GM18951 (cell line): ENCODE measurements at regions of chr7 and their contacts with region 1.

Region 1: DNA sequence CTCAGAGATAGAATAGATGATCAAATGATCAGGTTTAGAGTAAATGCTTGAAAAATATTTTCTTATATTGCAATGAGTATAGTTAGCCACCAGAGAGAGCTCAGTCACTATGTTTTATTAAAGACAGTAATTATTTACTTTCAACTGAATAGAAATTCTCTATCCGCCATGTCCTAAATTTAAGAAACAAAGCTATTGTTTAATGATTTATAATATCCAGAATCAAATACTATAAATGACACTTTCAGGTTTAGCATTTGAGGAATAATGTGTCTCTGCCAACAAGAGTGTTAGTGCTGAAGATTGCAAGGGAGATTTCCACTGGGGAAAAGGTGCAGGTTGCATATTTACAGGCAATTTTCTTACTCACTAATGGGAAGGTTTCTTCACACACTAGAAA is 184.7 kb downstream of the DGKB start:
- POLR2A ChIP-seq: no peak

Region 2: GRCh38 chr7:15015545-15016326 is 297.9 kb after region 1 on chr7:
- in situ Hi-C with region 1: loop called (anchors 10 kb)
- POLR2A ChIP-seq: no peak

Region 3: GRCh38 chr7:16071246-16071857 is 1353.5 kb after region 1 on chr7:
- in situ Hi-C with region 1: loop called (anchors 25 kb)
- POLR2A ChIP-seq: no peak